GM12878 (cell line): ENCODE measurements at regions of chr3 and their contacts with region 1.

Region 1: GRCh38 chr3:172009803-172010202 is 29.6 kb upstream of the FNDC3B start:
- DNase-seq: no peak
- ATAC-seq: no peak
- H3K4me3 ChIP-seq: no peak overlapping the region
- H3K27ac ChIP-seq: no peak overlapping the region
- H3K4me1 ChIP-seq: no peaks in the 10 kb centered on the region
- H3K27me3 ChIP-seq: no peaks in the 10 kb centered on the region
- CTCF ChIP-seq: no peak
- EP300 ChIP-seq: no peak
- POLR2A ChIP-seq: no peak
- RAD21 ChIP-seq: no peak

Region 2: GRCh38 chr3:172042136-172042662 is 32.4 kb after region 1 on chr3:
- CTCF ChIA-PET with region 1: no interaction called
- POLR2A ChIA-PET with region 1: no interaction called
- RAD21 ChIA-PET with region 1: no interaction called
- SMC1A ChIA-PET with region 1: no interaction called
- in situ Hi-C with region 1: no loop called
- intact Hi-C with region 1: no loop called
- DNase-seq: no peak
- ATAC-seq: no peak
- H3K4me3 ChIP-seq: no peak overlapping the region
- H3K27ac ChIP-seq: no peak overlapping the region
- H3K4me1 ChIP-seq: peaks cover 7% of the 10 kb centered on the region; the same call in 1 of the 2 replicates
- H3K27me3 ChIP-seq: no peaks in the 10 kb centered on the region
- CTCF ChIP-seq: no peak
- EP300 ChIP-seq: no peak
- POLR2A ChIP-seq: no peak
- RAD21 ChIP-seq: no peak

Region 3: DNA sequence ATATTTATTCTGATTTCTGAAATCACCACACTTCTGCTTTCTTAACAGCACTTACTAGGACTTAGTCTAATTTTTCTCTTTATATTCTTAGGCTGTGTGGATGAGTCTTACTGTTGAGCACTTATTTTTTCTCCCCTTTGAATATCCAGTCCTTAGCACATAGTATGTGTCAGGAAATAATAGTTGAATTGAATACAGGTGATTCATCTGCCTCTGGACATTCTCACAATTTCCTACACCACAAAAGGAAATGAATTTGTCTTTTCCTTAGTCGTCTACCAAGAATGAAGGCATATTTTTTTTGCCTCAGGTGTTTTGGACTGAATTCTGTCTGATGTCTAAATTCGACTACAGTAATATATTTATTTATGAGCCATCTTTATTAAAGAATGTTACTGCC is 234.2 kb after region 1 on chr3:
- CTCF ChIA-PET with region 1: no interaction called
- POLR2A ChIA-PET with region 1: interaction called, 12 read pairs
- RAD21 ChIA-PET with region 1: no interaction called
- SMC1A ChIA-PET with region 1: no interaction called
- in situ Hi-C with region 1: no loop called
- intact Hi-C with region 1: no loop called
- DNase-seq: no peak
- ATAC-seq: no peak
- H3K4me3 ChIP-seq: no peak overlapping the region
- H3K27ac ChIP-seq: no peak overlapping the region
- H3K4me1 ChIP-seq: no peaks in the 10 kb centered on the region
- H3K27me3 ChIP-seq: no peaks in the 10 kb centered on the region
- CTCF ChIP-seq: no peak
- EP300 ChIP-seq: no peak
- POLR2A ChIP-seq: no peak
- RAD21 ChIP-seq: no peak